ENCODE measurements at regions of chr16 and their contacts with region 1.

Region 1: DNA sequence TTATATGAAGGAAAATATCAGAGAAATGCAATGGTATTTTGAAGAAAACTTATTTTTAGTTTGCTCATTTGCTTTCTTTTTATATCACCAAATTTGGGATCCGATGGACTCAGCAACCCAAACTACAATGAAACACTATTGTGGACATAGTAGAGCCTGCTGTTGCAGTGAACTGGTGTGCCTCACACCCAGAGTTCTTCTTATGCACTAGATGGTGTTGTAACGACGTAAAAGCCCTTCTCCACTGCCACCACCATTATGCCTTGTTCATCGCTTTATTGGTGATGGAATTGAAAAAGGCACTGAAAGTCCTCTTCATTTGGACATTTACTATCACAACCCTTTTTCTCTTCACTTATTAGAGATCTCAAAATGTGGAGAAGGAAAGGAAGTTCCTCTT is 381.3 kb downstream of the CDH8 start:
- DNase-seq: no peak
- H3K4me3 ChIP-seq: no peak overlapping the region
- H3K27ac ChIP-seq: no peak overlapping the region
- H3K4me1 ChIP-seq: no peaks in the 10 kb centered on the region
- CTCF ChIP-seq: no peak

Region 2: DNA sequence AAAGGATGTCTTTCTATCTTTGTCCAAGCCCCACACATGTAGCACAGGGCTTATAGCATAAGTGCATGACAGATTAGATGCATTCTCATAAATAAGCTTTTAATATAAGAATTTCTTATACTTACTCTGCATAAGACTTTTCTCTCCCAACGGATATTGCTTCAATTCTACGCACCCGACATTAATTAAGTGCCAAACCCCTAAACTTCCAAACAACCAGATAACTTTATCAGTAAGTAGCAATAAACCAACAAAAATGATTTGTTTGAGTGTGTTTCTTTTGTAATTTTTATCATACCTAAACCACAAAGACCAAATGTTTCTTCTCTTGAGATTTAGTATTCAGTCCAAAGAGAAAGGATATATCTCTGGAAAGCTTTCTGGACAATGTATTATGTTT is 10.2 kb before region 1 on chr16:
- CTCF ChIA-PET with region 1: no interaction called
- POLR2A ChIA-PET with region 1: no interaction called
- intact Hi-C with region 1: loop called (anchors 1 kb)
- DNase-seq: no peak
- H3K4me3 ChIP-seq: no peak overlapping the region
- H3K27ac ChIP-seq: no peak overlapping the region
- H3K4me1 ChIP-seq: no peaks in the 10 kb centered on the region
- CTCF ChIP-seq: no peak

Measured in OCI-LY7 (cell line).